ENCODE measurements at regions of chr5 and their contacts with region 1.

Region 1: GRCh38 chr5:157820593-157821252 is 38.2 kb downstream of the CLINT1 start:
- DNase-seq: peak; percentile 53

Region 2: DNA sequence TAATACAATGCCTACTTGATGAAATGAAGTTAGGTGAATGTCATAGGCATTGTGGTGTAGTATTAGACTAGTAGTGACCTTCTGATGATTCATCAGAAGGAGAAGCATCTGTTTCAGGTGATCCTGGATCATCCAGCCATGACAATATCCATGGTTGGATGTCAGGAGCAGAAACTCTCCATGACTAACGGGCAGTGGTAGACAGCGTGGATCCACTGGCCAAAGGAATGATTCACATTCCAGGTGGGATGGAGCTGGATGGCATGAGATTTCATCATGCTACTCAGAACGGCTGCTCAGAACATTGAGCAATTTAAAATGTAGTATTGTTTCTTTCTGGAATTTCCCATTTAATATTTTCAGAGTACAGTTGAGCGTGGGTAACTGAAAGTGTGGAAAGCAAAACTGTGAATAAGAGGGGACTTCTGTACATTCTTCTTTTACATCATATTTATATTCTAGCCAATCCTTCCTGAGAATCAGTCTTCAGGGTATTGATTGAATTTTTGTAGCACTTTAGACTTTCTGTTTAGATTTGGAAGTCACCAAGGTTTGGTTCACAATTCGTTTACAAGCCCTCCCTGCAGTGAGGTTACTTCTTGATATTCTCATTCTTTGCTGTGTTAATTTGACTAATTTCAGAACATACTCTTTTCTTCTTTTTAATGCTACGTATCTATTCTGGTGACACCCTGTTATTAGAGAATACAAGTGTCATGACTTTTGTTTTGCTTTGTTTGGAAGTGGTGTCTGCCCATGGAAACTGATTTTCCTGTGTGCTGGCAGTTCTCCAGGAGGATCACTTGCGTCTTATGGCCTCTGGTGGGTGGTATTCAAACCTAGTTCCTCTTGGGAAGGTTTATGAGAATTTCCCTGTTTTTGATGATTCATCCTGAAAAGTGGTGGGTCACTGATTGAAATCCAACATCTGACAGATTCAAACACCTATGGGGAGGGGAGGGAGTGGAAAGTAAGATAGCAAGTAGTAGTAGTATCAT is 50.4 kb after region 1 on chr5:
- in situ Hi-C with region 1: no loop called
- DNase-seq: no peak

Region 3: DNA sequence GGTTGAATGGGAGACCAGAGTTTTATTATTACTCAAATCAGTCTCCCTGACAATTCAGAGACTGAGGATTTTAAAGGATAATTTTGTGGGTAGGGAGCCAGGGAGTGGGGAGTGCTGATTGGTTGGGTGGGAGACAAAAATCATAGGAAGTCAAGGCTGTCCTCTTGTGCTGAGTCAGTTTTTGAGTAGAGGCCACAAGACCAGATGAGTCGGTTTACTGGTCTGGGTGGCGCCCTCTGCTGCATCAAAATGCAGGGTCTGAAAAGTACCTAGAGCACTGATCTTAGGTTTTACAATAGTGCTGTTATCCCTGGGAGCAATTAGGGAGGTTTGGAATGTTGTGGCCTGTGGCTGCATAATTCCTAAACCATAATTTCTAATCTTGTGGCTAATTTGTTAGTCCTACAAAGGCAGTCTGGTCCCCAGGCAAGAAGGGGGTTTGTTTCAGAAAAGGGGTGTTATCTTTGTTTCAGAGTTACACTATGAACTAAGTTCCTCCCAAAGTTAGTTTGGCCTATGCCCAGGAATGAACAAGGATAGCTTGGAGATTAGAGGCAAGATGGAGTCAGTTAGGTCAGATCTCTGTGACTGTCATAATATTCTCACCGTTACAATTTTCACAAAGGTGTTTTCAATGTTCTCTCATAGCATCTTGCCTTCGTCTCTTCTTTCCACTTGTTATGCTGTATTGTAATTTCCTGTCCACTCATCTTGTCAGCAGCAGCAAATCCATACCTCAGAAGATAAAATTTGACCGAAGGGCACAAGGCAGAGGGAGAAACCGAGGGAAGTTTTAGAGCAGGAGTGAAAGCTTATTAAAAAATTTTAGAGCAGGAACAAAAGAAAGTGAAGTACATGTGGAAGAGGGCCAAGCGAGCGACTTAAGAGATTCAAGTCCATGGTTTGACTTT is 97.4 kb after region 1 on chr5:
- in situ Hi-C with region 1: loop called (anchors 25 kb)
- DNase-seq: peak; percentile 32